ENCODE measurements at regions of chr17 and their contacts with region 1.

Region 1: GRCh38 chr17:65154770-65155621 is 17.8 kb downstream of the RGS9 start:
- DNase-seq: peak; percentile 87 to 98 (median 95)
- H3K4me3 ChIP-seq: peak overlapping the region in 1 of 7 experiments; percentile 12
- H3K27ac ChIP-seq: no peak overlapping the region
- H3K4me1 ChIP-seq: peaks cover 6 to 24% (median 19%) of the 10 kb centered on the region in 4 experiments
- H3K27me3 ChIP-seq: peaks cover 0 to 5% (median 0%) of the 10 kb centered on the region in 5 experiments

Region 2: DNA sequence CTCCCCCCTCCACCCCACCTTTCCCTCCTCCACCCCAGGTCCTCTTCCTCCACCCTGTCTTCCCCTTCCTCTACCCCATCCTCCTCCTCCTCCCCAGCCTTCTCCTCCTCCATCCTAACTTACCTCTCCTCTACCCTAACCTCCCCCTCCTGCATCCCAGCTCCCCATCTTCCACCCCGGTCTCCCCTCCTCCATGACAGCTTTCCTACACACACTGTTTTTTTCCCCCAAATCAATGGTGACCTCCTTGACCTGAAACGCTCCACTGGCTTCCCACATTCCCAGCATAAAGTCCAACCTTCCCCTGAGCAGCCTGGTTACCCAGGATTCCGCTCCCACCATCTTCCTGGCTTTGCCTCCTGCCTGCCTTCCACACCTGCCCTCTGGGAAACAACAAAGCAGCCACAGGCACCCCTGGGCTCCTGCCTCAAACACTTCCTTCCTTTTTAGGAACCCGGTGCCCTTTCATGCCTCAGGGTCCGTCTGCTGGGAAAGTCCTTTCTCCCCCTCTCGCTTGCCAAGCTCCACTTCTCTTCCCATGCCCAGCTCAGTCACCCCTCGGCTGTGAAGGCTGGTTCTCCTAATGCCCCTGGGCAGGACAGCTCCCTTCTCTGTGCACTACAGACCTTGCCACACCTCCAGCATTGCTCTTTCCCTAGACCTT is 15.8 kb before region 1 on chr17:
- CTCF ChIA-PET with region 1: interaction called, 26 read pairs
- POLR2A ChIA-PET with region 1: no interaction called
- DNase-seq: no peak
- H3K4me3 ChIP-seq: no peak overlapping the region
- H3K27ac ChIP-seq: no peak overlapping the region
- H3K4me1 ChIP-seq: peaks cover 0 to 14% (median 10%) of the 10 kb centered on the region in 4 experiments
- H3K27me3 ChIP-seq: peaks cover 0 to 21% (median 14%) of the 10 kb centered on the region in 5 experiments

Region 3: GRCh38 chr17:65173284-65173793 is 18.3 kb after region 1 on chr17:
- CTCF ChIA-PET with region 1: interaction called, 21 read pairs
- POLR2A ChIA-PET with region 1: interaction called, 8 read pairs
- DNase-seq: peak; percentile 79 to 92 (median 90)
- H3K4me3 ChIP-seq: peak overlapping the region in 3 of 7 experiments; percentile 6 to 12 (median 6)
- H3K27ac ChIP-seq: no peak overlapping the region
- H3K4me1 ChIP-seq: peaks cover 7 to 33% (median 31%) of the 10 kb centered on the region in 4 experiments
- H3K27me3 ChIP-seq: no peaks in the 10 kb centered on the region

Region 4: DNA sequence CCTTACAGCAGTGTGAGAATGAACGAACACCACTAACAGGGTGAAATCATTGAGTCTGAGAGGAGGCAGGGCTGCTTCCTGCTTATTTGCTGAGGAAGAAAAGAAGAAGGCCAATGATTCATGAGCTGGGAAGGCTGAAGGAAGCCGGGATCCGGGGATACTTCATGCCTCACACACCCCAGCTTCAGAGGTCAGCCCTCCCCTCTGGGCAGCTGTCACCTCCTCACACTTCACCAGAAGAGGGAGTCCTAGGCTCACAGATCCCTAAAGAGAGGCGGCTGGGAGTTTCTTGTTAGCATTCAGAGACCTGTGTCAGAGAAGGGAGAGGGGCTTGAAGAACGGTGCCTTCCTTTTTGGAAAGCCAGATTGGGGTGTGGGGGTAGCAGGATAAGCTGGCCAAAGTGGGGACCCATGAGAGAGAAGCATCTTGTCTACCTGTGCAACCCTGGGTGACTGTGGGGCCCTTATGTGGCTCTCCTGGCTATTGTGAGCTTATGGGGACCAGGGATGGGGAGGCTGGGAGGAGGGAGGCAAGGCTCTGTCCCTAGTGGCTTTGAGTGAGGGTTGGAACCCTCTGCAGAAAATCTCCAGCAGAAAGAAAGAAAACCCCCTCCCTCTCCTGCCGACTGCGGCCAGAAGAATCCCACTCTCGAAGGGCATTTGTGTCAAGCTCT is 76.8 kb after region 1 on chr17:
- CTCF ChIA-PET with region 1: no interaction called
- POLR2A ChIA-PET with region 1: no interaction called
- DNase-seq: peak; percentile 63 to 77 (median 67)
- H3K4me3 ChIP-seq: no peak overlapping the region
- H3K27ac ChIP-seq: no peak overlapping the region
- H3K4me1 ChIP-seq: peaks cover 8 to 28% (median 24%) of the 10 kb centered on the region in 4 experiments
- H3K27me3 ChIP-seq: peaks cover 0 to 83% (median 32%) of the 10 kb centered on the region in 5 experiments

Region 5: DNA sequence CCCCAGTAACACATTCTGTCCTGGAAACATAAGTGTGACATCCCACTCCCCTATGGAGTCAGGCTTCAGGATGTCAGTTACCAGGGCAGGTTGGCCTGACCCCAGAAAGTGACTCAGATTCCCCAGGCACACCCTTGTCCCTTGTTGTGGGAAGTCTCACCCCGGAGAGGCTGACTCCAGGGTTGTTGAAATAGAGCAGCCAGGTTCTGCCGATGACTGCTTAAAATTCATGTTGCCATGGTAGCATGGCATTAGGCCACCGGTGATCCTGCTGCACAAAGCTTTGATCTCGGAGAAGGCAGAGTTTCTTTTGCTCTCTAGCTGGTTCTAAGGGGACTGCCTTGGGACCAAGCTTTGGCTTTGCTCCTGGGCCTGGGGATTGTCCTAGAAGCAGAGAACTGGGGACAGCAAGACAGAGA is 88.8 kb after region 1 on chr17:
- CTCF ChIA-PET with region 1: no interaction called
- POLR2A ChIA-PET with region 1: no interaction called
- DNase-seq: no peak
- H3K4me3 ChIP-seq: no peak overlapping the region
- H3K27ac ChIP-seq: no peak overlapping the region
- H3K4me1 ChIP-seq: no peaks in the 10 kb centered on the region
- H3K27me3 ChIP-seq: peaks cover 0 to 77% (median 38%) of the 10 kb centered on the region in 5 experiments

Region 6: GRCh38 chr17:65301184-65301583 is 146.2 kb after region 1 on chr17:
- CTCF ChIA-PET with region 1: no interaction called
- POLR2A ChIA-PET with region 1: no interaction called
- DNase-seq: no peak
- H3K4me3 ChIP-seq: no peak overlapping the region
- H3K27ac ChIP-seq: no peak overlapping the region
- H3K4me1 ChIP-seq: no peaks in the 10 kb centered on the region
- H3K27me3 ChIP-seq: peaks cover 0 to 53% (median 5%) of the 10 kb centered on the region in 5 experiments